ENCODE measurements at regions of chr3 and their contacts with region 1.

Region 1: GRCh38 chr3:49171119-49171774 is at the start of gene KLHDC8B:
- DNase-seq: no peak
- H3K4me3 ChIP-seq: peak within 1 kb of the TSS; percentile 78
- CTCF ChIP-seq: peak; percentile 96

Region 2: GRCh38 chr3:48708481-48708889 is 462.8 kb before region 1 on chr3:
- CTCF ChIA-PET with region 1: no interaction called
- POLR2A ChIA-PET with region 1: no interaction called
- DNase-seq: no peak
- H3K4me3 ChIP-seq: no peak overlapping the region
- CTCF ChIP-seq: no peak

Region 3: DNA sequence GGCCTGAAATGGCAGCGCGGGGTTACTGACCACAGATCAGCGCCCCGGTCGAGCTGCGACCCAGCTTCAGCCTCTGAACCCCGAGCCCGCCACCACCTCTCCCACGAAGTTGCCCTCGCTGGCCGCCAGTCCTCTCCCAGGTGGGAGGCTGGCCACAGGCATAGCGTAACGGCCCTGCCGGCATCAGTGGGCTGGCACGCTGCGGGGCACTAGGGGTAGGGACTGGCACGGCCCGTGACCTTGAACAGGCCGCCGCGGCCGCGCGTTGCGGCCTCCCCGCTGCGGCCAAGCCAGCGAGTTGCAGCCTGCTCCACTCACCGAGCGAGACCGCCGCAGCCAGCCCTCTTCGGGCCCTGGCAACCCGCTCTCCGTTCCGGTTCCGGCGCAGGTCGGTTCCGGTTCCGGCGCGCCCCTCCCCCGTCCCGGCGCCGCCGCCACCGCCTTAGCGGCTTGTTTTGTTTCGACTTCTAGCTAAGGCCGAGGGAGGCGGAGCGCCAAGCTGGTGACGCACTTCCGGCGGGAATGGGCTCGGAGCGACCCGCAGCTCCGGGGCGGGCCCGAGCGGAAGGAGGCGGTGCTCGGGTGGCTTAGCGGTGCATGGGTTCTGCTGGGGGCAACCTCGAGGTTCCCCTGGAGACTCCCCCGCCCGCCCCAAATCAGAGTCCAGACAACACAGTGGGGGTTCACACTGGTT is 50.7 kb before region 1 on chr3 and contains the start of gene USP19:
- CTCF ChIA-PET with region 1: no interaction called
- POLR2A ChIA-PET with region 1: no interaction called
- DNase-seq: no peak
- H3K4me3 ChIP-seq: peak within 1 kb of the TSS; percentile 96
- CTCF ChIP-seq: no peak

Region 4: DNA sequence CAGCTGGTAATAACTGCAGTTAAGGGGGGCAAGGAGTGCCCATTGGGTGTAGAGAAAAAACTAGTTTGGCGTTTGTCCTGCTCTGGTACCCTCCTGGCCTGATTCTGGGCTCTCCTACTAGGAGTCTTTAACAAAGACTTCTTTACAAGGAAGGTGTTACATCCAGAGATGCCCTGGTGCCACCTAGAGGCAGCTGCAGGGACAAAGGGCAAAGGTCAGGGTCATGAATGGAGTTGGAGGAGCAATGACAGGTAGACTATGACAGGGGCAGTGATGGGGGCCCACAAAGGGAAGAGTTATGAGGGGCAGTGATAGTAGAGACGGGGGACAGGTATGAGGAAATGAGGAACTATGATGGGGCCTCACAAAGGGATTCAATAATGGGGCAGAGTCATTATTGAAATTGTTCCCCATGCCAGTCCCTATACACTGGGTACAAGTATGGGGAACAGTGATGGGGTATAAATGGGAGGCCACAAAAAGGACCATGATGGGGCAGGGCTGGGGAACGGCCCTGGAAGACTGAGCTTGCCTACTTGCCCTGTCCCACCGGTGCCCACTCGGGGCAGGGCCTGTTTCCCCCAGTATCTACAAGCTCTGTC is 13.0 kb before region 1 on chr3:
- CTCF ChIA-PET with region 1: interaction called, 28 read pairs
- POLR2A ChIA-PET with region 1: interaction called, 3 read pairs
- DNase-seq: no peak
- H3K4me3 ChIP-seq: no peak overlapping the region
- CTCF ChIP-seq: no peak

Region 5: GRCh38 chr3:49181351-49181750 is 10.1 kb after region 1 on chr3:
- CTCF ChIA-PET with region 1: interaction called, 28 read pairs
- POLR2A ChIA-PET with region 1: no interaction called
- DNase-seq: no peak
- H3K4me3 ChIP-seq: no peak overlapping the region
- CTCF ChIP-seq: no peak

Region 6: DNA sequence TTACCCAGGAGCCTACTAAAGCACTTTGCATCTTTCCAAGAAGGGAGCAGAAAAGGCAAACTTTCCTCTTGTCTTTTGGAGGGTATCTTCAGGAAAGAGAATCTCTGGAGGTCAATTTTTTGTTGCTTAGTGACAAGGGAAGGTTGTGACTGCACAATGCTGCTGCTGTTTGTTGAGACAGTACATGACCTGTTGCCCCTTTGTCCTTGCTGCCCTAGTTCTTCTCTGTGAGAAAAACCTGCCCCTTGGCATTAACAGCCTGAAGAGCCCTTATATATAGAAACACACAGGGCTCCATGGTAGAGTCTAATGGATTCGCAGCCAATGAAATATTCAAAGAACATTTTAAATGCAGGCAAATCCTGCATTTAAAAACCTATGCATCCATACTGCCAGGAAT is 20.5 kb after region 1 on chr3:
- CTCF ChIA-PET with region 1: interaction called, 10 read pairs
- POLR2A ChIA-PET with region 1: no interaction called
- DNase-seq: no peak
- H3K4me3 ChIP-seq: no peak overlapping the region
- CTCF ChIP-seq: no peak

Region 7: GRCh38 chr3:49276475-49277382 is 105.5 kb after region 1 on chr3 and contains the start of gene C3orf62:
- CTCF ChIA-PET with region 1: interaction called, 14 read pairs
- POLR2A ChIA-PET with region 1: no interaction called
- DNase-seq: no peak
- H3K4me3 ChIP-seq: peak within 1 kb of the TSS; percentile 58
- CTCF ChIP-seq: no peak

Region 8: GRCh38 chr3:49445381-49445780 is 274.1 kb after region 1 on chr3:
- CTCF ChIA-PET with region 1: interaction called, 58 read pairs
- POLR2A ChIA-PET with region 1: no interaction called
- DNase-seq: no peak
- H3K4me3 ChIP-seq: no peak overlapping the region
- CTCF ChIP-seq: no peak

Region 9: DNA sequence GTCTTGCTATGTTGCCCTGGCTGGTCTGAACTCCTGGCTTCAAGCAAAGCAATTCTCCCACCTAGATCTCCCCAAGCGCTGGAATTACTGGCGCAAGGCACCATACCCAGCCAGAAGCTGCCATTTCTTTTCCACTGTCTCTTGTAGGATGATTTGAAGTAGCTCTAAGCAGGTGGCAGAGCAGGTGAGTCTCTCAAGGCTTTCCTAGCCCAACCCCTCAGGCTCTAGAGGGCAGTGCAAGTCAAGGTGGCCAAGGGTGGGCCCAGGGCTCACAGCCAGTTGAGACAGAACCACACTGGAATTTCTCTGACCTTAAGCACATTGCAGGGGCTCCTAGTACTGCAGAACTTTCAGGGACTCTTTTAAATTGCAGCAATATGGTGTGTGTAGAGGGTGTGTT is 283.2 kb after region 1 on chr3:
- CTCF ChIA-PET with region 1: interaction called, 58 read pairs
- POLR2A ChIA-PET with region 1: no interaction called
- DNase-seq: no peak
- H3K4me3 ChIP-seq: no peak overlapping the region
- CTCF ChIP-seq: no peak